ENCODE measurements at regions of chr18 and their contacts with region 1.

Region 1: DNA sequence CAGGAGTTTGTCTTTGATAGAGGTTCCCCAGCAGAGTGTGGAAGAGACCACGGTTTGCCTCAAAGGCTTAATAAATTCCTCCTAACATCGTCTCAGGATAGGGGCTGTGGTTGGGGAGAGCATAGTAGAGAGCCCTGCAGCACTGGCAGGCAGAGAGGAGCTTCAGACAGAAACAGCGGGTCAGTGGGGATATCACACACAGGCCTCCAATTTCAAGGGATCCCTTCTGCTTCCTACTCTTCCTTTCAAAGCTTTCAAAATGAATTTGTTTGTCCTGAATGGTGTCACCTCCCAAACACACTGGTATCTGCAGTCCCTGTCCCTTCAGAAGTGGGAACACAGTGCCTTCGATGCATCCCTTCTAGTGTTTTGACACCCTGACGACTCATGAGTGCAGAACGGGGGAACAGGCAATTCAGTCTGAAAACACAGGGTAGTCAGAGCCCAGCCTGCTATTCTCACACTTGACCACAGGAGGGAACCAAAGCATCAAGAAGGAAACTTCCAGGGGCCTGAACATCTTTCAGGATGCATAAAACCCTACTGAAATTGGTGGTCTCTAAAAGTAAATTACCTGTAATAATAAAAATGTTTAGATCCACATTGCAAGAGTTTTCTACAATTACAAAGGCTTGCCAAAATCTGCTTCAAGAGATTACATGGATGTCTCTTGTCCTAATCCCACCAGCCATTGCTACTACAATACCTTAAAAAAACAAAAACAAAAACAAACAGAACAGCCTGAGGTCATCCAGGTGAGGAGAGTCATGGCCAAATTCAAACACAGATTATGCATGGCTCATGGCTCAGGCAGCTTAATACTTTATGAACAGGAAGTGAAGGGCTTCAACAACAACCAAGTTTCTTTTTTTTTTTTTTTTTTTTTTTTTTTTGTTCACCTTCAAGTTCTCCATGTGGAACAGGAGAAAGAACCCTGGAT is 49.8 kb downstream of the SLC14A2 start:
- DNase-seq: peak; percentile 52 to 86 (median 72)
- H3K4me3 ChIP-seq: no peak overlapping the region
- H3K27ac ChIP-seq: peak overlapping the region in 2 of 5 donors; percentile 4 to 76
- H3K4me1 ChIP-seq: peaks cover 22 to 28% of the 10 kb centered on the region in 2 donors
- H3K27me3 ChIP-seq: no peaks in the 10 kb centered on the region
- CTCF ChIP-seq: peak; percentile 91 to 98 (median 95)
- POLR2A ChIP-seq: no peak

Region 2: GRCh38 chr18:45136381-45137086 is 528.6 kb before region 1 on chr18:
- intact Hi-C with region 1: no loop called
- DNase-seq: no peak
- H3K4me3 ChIP-seq: no peak overlapping the region
- H3K27ac ChIP-seq: no peak overlapping the region
- H3K4me1 ChIP-seq: no peaks in the 10 kb centered on the region
- H3K27me3 ChIP-seq: no peaks in the 10 kb centered on the region
- CTCF ChIP-seq: no peak
- POLR2A ChIP-seq: no peak

Region 3: GRCh38 chr18:46073474-46074331 is 408.6 kb after region 1 on chr18:
- intact Hi-C with region 1: loop called (anchors 10 kb)
- DNase-seq: peak; percentile 34 to 73 (median 69)
- H3K4me3 ChIP-seq: no peak overlapping the region
- H3K27ac ChIP-seq: no peak overlapping the region
- H3K4me1 ChIP-seq: peaks cover 8 to 15% of the 10 kb centered on the region in 2 donors
- H3K27me3 ChIP-seq: no peaks in the 10 kb centered on the region
- CTCF ChIP-seq: peak; percentile 58 to 76 (median 72)
- POLR2A ChIP-seq: no peak

Measured in adrenal gland (tissue), 19 donors.